ENCODE measurements at regions of chr1 and their contacts with region 1.

Region 1: GRCh38 chr1:239951511-239952140 is 140.1 kb upstream of the FMN2 start:
- DNase-seq: peak; percentile 28 to 48
- H3K4me3 ChIP-seq: no peak overlapping the region
- H3K27ac ChIP-seq: no peak overlapping the region
- H3K4me1 ChIP-seq: no peaks in the 10 kb centered on the region
- H3K27me3 ChIP-seq: peaks cover 28% of the 10 kb centered on the region
- CTCF ChIP-seq: peak; percentile 80

Region 2: DNA sequence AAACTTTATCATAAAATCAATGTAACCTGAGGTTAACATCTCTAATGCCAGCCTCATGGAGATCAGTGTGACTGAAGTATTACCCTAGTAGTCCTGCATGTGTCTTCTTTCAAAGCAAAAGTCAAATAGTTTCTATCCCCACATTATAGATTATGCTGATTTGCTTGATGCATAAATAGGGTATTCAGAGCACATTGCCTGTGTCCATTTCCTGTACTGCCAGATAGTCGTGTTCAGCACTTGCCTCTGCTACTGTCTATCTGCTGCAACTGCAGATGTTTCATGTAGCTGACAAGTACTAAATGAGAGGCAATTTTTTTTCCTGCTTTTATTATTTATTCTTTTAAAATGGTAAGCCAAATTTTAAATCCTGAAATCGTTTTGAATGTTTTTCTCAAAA is 216.5 kb before region 1 on chr1:
- CTCF ChIA-PET with region 1: no interaction called
- POLR2A ChIA-PET with region 1: no interaction called
- intact Hi-C with region 1: no loop called
- DNase-seq: no peak
- H3K4me3 ChIP-seq: no peak overlapping the region
- H3K27ac ChIP-seq: no peak overlapping the region
- H3K4me1 ChIP-seq: no peaks in the 10 kb centered on the region
- H3K27me3 ChIP-seq: no peaks in the 10 kb centered on the region
- CTCF ChIP-seq: no peak

Region 3: GRCh38 chr1:239987103-239987745 is 35.6 kb after region 1 on chr1:
- CTCF ChIA-PET with region 1: no interaction called
- POLR2A ChIA-PET with region 1: no interaction called
- intact Hi-C with region 1: loop called (anchors 1 kb)
- DNase-seq: peak in 1 of 2 experiments; percentile 10
- H3K4me3 ChIP-seq: no peak overlapping the region
- H3K27ac ChIP-seq: no peak overlapping the region
- H3K4me1 ChIP-seq: no peaks in the 10 kb centered on the region
- H3K27me3 ChIP-seq: no peaks in the 10 kb centered on the region
- CTCF ChIP-seq: peak; percentile 79

Region 4: GRCh38 chr1:240189386-240189989 is 237.9 kb after region 1 on chr1:
- CTCF ChIA-PET with region 1: no interaction called
- POLR2A ChIA-PET with region 1: no interaction called
- intact Hi-C with region 1: loop called (anchors 2 kb)
- DNase-seq: peak in 1 of 2 experiments; percentile 18
- H3K4me3 ChIP-seq: no peak overlapping the region
- H3K27ac ChIP-seq: no peak overlapping the region
- H3K4me1 ChIP-seq: no peaks in the 10 kb centered on the region
- H3K27me3 ChIP-seq: peaks cover 23% of the 10 kb centered on the region
- CTCF ChIP-seq: peak; percentile 78

Region 5: GRCh38 chr1:240285541-240285940 is 333.9 kb after region 1 on chr1:
- CTCF ChIA-PET with region 1: no interaction called
- POLR2A ChIA-PET with region 1: no interaction called
- intact Hi-C with region 1: no loop called
- DNase-seq: no peak
- H3K4me3 ChIP-seq: no peak overlapping the region
- H3K27ac ChIP-seq: no peak overlapping the region
- H3K4me1 ChIP-seq: no peaks in the 10 kb centered on the region
- H3K27me3 ChIP-seq: no peaks in the 10 kb centered on the region
- CTCF ChIP-seq: no peak

Measured in PC-9 (cell line).